ENCODE measurements at regions of chr1 and their contacts with region 1.

Region 1: GRCh38 chr1:175114996-175115395 is 47.4 kb downstream of the TNN start:
- DNase-seq: no peak
- ATAC-seq: no peak
- H3K4me3 ChIP-seq: no peak overlapping the region
- H3K27ac ChIP-seq: no peak overlapping the region
- H3K4me1 ChIP-seq: no peaks in the 10 kb centered on the region
- H3K27me3 ChIP-seq: no peaks in the 10 kb centered on the region
- CTCF ChIP-seq: no peak

Region 2: GRCh38 chr1:175043824-175044223 is 71.2 kb before region 1 on chr1:
- intact Hi-C with region 1: loop called in 1 of 10 experiments (anchors 5 kb)
- DNase-seq: no peak
- ATAC-seq: no peak
- H3K4me3 ChIP-seq: no peak overlapping the region
- H3K27ac ChIP-seq: no peak overlapping the region
- H3K4me1 ChIP-seq: no peaks in the 10 kb centered on the region
- H3K27me3 ChIP-seq: no peaks in the 10 kb centered on the region
- CTCF ChIP-seq: no peak

Region 3: GRCh38 chr1:175174309-175175165 is 59.5 kb after region 1 on chr1:
- intact Hi-C with region 1: no loop called
- DNase-seq: no peak
- ATAC-seq: no peak
- H3K4me3 ChIP-seq: no peak overlapping the region
- H3K27ac ChIP-seq: no peak overlapping the region
- H3K4me1 ChIP-seq: peaks cover 0 to 40% (median 14%) of the 10 kb centered on the region in 9 donors
- H3K27me3 ChIP-seq: no peaks in the 10 kb centered on the region
- CTCF ChIP-seq: no peak

Region 4: GRCh38 chr1:175267716-175268384 is 152.9 kb after region 1 on chr1:
- intact Hi-C with region 1: no loop called
- DNase-seq: peak; percentile 50 to 83
- ATAC-seq: peak; percentile 86 to 94 (median 92)
- H3K4me3 ChIP-seq: no peak overlapping the region
- H3K27ac ChIP-seq: peak overlapping the region; percentile 30 to 77 (median 57)
- H3K4me1 ChIP-seq: peaks cover 0 to 28% (median 4%) of the 10 kb centered on the region in 9 donors
- H3K27me3 ChIP-seq: no peaks in the 10 kb centered on the region
- CTCF ChIP-seq: no peak